Heart right ventricle (tissue), 16 donors: ENCODE measurements at regions of chr22 and their contacts with region 1.

Region 1: GRCh38 chr22:39319270-39320022 is at the start of gene RPL3:
- DNase-seq: peak; percentile 97 to 98
- ATAC-seq: peak; percentile 87 to 95 (median 93)
- H3K4me3 ChIP-seq: peak within 1 kb of the TSS; percentile 59 to 83 (median 76)
- H3K27ac ChIP-seq: peak within 1 kb of the TSS; percentile 91 to 99 (median 98)
- H3K4me1 ChIP-seq: peaks cover 32 to 52% (median 47%) of the 10 kb centered on the region in 9 donors
- H3K27me3 ChIP-seq: no peaks in the 10 kb centered on the region
- CTCF ChIP-seq: peak in 7 of 9 donors; percentile 12 to 45 (median 29)
- total RNA-seq, gene RPL3: 215 to 604 (median 286) TPM

Region 2: GRCh38 chr22:38788021-38788816 is 531.2 kb before region 1 on chr22:
- intact Hi-C with region 1: loop called in 1 of 10 experiments (anchors 10 kb)
- DNase-seq: peak; percentile 42 to 72
- ATAC-seq: peak; percentile 76 to 91 (median 81)
- H3K4me3 ChIP-seq: no peak overlapping the region
- H3K27ac ChIP-seq: peak overlapping the region; percentile 79 to 92 (median 84)
- H3K4me1 ChIP-seq: peaks cover 24 to 70% (median 46%) of the 10 kb centered on the region in 9 donors
- H3K27me3 ChIP-seq: no peaks in the 10 kb centered on the region
- CTCF ChIP-seq: no peak

Region 3: GRCh38 chr22:39152511-39153219 is 166.8 kb before region 1 on chr22 and contains the start of gene CBX7:
- intact Hi-C with region 1: loop called in 3 of 10 experiments (anchors 2 to 5 kb)
- DNase-seq: peak; percentile 95 to 96
- ATAC-seq: peak; percentile 90 to 93 (median 92)
- H3K4me3 ChIP-seq: peak within 1 kb of the TSS; percentile 87 to 99 (median 94)
- H3K27ac ChIP-seq: peak within 1 kb of the TSS; percentile 83 to 97 (median 95)
- H3K4me1 ChIP-seq: peaks cover 7 to 56% (median 47%) of the 10 kb centered on the region in 9 donors
- H3K27me3 ChIP-seq: peaks cover 0 to 18% (median 0%) of the 10 kb centered on the region in 7 donors
- CTCF ChIP-seq: no peak
- total RNA-seq, gene CBX7: 48.8 to 85.8 (median 76.3) TPM

Region 4: DNA sequence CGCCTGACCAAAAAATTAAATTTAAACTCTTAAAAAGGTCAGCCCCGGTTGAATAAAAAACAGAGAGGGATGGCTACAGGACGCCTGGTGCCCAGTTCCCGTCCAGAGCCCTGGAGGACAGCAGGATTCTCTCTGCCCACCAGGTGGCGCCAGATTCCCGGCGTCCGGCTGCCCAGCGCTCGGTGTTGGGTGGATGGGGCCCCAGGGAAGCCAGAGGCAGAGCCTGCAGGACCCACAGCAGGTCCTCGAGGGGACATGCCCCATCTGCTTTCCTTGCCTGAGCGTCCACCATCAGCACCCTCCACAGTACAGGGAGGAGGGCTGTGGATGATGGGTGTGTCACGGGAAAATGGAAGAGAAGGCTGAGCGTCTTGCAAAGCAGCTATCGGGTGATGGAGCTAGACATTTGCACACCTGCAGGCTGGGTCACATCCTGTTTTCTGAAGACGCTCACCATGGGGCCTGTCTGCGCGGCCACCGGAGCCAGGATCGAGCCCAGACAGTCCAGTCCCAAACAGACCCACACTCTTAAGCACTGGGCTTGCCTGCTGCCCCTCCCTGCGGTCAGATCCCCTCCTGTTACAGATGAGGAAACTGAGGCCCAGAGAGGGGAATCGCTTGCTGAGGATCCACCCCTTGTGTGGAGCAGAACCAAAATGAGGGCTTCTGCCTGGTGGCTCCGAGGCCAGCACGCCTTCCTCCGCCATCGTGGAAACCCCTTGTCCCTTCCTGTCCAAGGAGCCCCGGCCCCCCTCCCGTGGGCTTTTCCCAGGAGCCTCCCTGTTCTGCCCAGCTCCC is 148.4 kb before region 1 on chr22:
- intact Hi-C with region 1: loop called in 3 of 10 experiments (anchors 1 to 2 kb)
- DNase-seq: peak; percentile 83 to 89
- ATAC-seq: peak; percentile 70 to 86 (median 82)
- H3K4me3 ChIP-seq: peak overlapping the region in 3 of 10 donors; percentile 10 to 23 (median 18)
- H3K27ac ChIP-seq: peak overlapping the region in 6 of 10 donors; percentile 0 to 92 (median 27)
- H3K4me1 ChIP-seq: peaks cover 32 to 57% (median 53%) of the 10 kb centered on the region in 9 donors
- H3K27me3 ChIP-seq: no peaks in the 10 kb centered on the region
- CTCF ChIP-seq: peak; percentile 93 to 97 (median 96)

Region 5: GRCh38 chr22:39439170-39439569 is 119.7 kb after region 1 on chr22:
- intact Hi-C with region 1: no loop called
- DNase-seq: no peak
- ATAC-seq: peak in 1 of 8 donors; percentile 13
- H3K4me3 ChIP-seq: no peak overlapping the region
- H3K27ac ChIP-seq: no peak overlapping the region
- H3K4me1 ChIP-seq: peaks cover 3 to 30% (median 18%) of the 10 kb centered on the region in 9 donors
- H3K27me3 ChIP-seq: peaks cover 0 to 13% (median 0%) of the 10 kb centered on the region in 7 donors
- CTCF ChIP-seq: no peak

Region 6: GRCh38 chr22:39690881-39691605 is 371.6 kb after region 1 on chr22:
- intact Hi-C with region 1: no loop called
- DNase-seq: no peak
- ATAC-seq: peak in 1 of 8 donors; percentile 15
- H3K4me3 ChIP-seq: no peak overlapping the region
- H3K27ac ChIP-seq: no peak overlapping the region
- H3K4me1 ChIP-seq: peaks cover 0 to 3% (median 0%) of the 10 kb centered on the region in 9 donors
- H3K27me3 ChIP-seq: peaks cover 10 to 94% (median 86%) of the 10 kb centered on the region in 7 donors
- CTCF ChIP-seq: no peak